CD14-positive monocyte (primary cell): ENCODE measurements at regions of chr12 and their contacts with region 1.

Region 1: DNA sequence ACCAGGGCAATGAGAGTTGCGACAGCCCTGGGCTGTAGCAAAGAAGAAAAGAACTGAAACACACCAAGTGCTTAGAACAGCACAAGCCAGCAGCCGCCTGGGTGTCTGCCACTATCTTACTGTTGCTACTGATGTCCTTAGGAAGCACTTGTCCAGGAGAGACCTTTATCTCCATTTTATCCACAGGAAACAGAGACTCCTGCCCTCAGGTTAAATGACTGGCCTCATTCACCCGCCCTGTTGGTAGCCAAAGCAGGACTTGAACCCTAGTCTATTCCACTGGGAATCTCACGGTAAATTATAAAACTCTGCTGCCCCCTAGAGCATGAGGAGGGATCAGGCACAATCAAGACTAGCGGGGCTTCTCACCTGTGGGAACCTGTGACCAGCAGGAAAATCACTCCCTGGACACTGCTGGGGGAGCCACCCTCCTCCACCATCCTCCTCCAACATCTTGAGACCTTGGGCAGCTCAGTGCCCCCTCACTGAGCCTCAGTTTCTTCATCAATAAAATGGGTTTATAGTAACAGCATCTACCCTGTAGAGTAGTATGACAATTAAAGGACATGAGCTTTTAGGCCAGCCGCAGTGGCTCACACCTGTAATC is 20.5 kb upstream of the TESC start:
- DNase-seq: peak in 2 of 3 donors; percentile 25 to 32
- H3K4me3 ChIP-seq: no peak overlapping the region
- H3K4me3 Mint-ChIP-seq: no peak overlapping the region
- H3K27ac ChIP-seq: no peak overlapping the region
- H3K27ac Mint-ChIP-seq: no peak overlapping the region
- H3K4me1 ChIP-seq: peaks cover 17 to 18% of the 10 kb centered on the region in 2 donors
- H3K4me1 Mint-ChIP-seq: peaks cover 23% of the 10 kb centered on the region
- H3K27me3 ChIP-seq: no peaks in the 10 kb centered on the region
- H3K27me3 Mint-ChIP-seq: peaks cover 0 to 3% (median 0%) of the 10 kb centered on the region in 3 donors
- CTCF ChIP-seq: peak; percentile 88

Region 2: DNA sequence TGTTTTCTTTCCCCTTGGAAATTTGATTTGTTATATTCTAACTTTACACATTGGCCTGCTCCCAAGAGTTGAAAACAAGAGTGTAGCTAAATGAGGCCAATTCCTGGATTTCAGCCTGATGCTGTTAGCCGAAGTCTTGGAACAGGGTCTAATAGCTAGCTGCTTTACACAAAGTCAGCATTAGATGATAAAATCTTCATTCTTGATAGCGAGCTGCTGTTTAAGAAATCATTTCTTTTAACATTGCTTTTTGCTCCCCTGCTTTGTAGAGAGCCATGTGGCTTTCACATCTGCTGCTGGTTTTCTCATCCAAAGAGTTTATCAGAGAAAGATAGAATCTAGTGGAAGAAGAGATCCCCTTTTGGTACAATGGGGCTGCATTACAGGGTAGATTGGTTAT is 186.6 kb before region 1 on chr12:
- intact Hi-C with region 1: no loop called
- DNase-seq: no peak
- H3K4me3 ChIP-seq: no peak overlapping the region
- H3K4me3 Mint-ChIP-seq: no peak overlapping the region
- H3K27ac ChIP-seq: no peak overlapping the region
- H3K27ac Mint-ChIP-seq: no peak overlapping the region
- H3K4me1 ChIP-seq: peaks cover 6 to 17% of the 10 kb centered on the region in 2 donors
- H3K4me1 Mint-ChIP-seq: peaks cover 30% of the 10 kb centered on the region
- H3K27me3 ChIP-seq: no peaks in the 10 kb centered on the region
- H3K27me3 Mint-ChIP-seq: no peaks in the 10 kb centered on the region
- CTCF ChIP-seq: no peak

Region 3: GRCh38 chr12:117025481-117026151 is 94.1 kb before region 1 on chr12:
- intact Hi-C with region 1: loop called (anchors 1 to 2 kb)
- DNase-seq: peak; percentile 25 to 56 (median 51)
- H3K4me3 ChIP-seq: no peak overlapping the region
- H3K4me3 Mint-ChIP-seq: no peak overlapping the region
- H3K27ac ChIP-seq: peak overlapping the region in 1 of 2 donors; percentile 52
- H3K27ac Mint-ChIP-seq: peak overlapping the region in 3 of 7 donors; percentile 61 to 77 (median 63)
- H3K4me1 ChIP-seq: peaks cover 0 to 3% of the 10 kb centered on the region in 2 donors
- H3K4me1 Mint-ChIP-seq: peaks cover 6% of the 10 kb centered on the region
- H3K27me3 ChIP-seq: no peaks in the 10 kb centered on the region
- H3K27me3 Mint-ChIP-seq: no peaks in the 10 kb centered on the region
- CTCF ChIP-seq: peak; percentile 97